ENCODE measurements at regions of chr12 and their contacts with region 1.

Region 1: DNA sequence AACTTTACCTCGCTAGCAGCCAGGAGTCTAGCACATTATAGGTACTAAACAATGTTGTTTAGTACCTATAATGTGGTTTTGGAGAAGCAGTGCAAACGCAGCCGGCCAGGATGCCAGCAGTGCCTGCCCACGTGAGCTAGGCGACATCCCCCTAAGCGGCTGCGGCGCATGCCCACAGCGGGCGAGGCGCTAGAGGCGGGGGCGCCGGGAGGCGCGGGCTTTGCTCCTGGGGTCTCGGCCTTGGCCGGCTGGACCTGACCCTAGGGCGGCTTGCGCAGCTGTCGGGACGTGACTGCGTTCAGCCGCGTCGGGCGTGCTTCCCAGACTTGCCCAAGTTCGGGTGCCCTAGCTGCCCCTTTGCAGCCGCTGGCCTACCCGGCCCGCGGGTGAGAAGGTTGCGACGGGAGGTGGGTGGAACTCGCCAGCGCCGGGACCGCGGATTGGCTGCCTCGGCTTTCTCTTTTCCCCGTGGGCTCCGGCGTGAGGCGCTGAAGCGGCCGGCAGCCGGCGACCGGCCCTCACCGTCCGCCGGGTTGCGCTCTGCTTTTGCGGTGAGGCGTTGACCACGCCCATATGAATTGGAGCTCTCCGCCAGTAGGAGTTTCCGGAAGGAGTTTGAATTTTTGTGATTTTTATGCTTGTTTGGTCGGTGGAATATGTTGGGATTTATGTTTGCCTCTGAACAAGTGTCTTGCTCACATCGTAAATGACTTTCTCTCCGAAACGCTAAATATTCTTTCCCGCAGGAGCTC is at the start of gene TMEM19:
- DNase-seq: peak; percentile 89
- H3K4me3 Mint-ChIP-seq: peak within 1 kb of the TSS; percentile 87
- H3K27ac Mint-ChIP-seq: peak within 1 kb of the TSS; percentile 76
- H3K4me1 Mint-ChIP-seq: peaks cover 16% of the 10 kb centered on the region
- H3K27me3 Mint-ChIP-seq: no peaks in the 10 kb centered on the region
- CTCF ChIP-seq: peak; percentile 11
- total RNA-seq, gene TMEM19: 7.2 and 7.3 TPM in 2 replicates

Region 2: DNA sequence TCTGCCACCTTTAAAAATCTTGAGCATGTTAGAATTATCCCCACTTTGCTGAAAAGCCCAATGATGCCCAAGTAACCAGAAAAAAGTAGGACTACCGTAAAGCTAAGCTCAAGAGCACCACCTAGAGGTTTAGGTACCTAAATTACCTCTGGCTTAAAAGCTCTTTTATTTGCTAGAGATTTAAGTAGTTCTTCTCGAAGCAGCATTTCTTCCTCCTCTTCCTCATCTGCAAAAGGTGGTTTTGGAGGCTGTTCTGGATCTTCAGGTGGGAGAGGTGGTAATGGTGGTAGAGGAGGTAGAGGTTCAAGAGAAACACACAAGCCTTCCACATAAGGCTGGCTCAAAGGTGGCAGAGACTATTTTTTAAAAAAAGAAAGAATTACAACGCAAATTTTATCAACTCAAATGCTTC is 49.4 kb before region 1 on chr12:
- CTCF ChIA-PET with region 1: interaction called, 11 read pairs
- POLR2A ChIA-PET with region 1: interaction called, 4 read pairs
- intact Hi-C with region 1: no loop called
- DNase-seq: peak; percentile 70
- H3K4me3 Mint-ChIP-seq: no peak overlapping the region
- H3K27ac Mint-ChIP-seq: no peak overlapping the region
- H3K4me1 Mint-ChIP-seq: peaks cover 6% of the 10 kb centered on the region
- H3K27me3 Mint-ChIP-seq: no peaks in the 10 kb centered on the region
- CTCF ChIP-seq: peak; percentile 66

Region 3: GRCh38 chr12:71671816-71672215 is 14.3 kb before region 1 on chr12:
- CTCF ChIA-PET with region 1: interaction called, 17 read pairs
- POLR2A ChIA-PET with region 1: interaction called, 248 read pairs
- intact Hi-C with region 1: no loop called
- DNase-seq: no peak
- H3K4me3 Mint-ChIP-seq: no peak overlapping the region
- H3K27ac Mint-ChIP-seq: no peak overlapping the region
- H3K4me1 Mint-ChIP-seq: peaks cover 5% of the 10 kb centered on the region
- H3K27me3 Mint-ChIP-seq: no peaks in the 10 kb centered on the region
- CTCF ChIP-seq: no peak

Region 4: GRCh38 chr12:71702590-71702989 is 16.5 kb after region 1 on chr12:
- CTCF ChIA-PET with region 1: interaction called, 24 read pairs
- POLR2A ChIA-PET with region 1: interaction called, 54 read pairs
- intact Hi-C with region 1: no loop called
- DNase-seq: no peak
- H3K4me3 Mint-ChIP-seq: no peak overlapping the region
- H3K27ac Mint-ChIP-seq: no peak overlapping the region
- H3K4me1 Mint-ChIP-seq: no peaks in the 10 kb centered on the region
- H3K27me3 Mint-ChIP-seq: no peaks in the 10 kb centered on the region
- CTCF ChIP-seq: no peak

Region 5: DNA sequence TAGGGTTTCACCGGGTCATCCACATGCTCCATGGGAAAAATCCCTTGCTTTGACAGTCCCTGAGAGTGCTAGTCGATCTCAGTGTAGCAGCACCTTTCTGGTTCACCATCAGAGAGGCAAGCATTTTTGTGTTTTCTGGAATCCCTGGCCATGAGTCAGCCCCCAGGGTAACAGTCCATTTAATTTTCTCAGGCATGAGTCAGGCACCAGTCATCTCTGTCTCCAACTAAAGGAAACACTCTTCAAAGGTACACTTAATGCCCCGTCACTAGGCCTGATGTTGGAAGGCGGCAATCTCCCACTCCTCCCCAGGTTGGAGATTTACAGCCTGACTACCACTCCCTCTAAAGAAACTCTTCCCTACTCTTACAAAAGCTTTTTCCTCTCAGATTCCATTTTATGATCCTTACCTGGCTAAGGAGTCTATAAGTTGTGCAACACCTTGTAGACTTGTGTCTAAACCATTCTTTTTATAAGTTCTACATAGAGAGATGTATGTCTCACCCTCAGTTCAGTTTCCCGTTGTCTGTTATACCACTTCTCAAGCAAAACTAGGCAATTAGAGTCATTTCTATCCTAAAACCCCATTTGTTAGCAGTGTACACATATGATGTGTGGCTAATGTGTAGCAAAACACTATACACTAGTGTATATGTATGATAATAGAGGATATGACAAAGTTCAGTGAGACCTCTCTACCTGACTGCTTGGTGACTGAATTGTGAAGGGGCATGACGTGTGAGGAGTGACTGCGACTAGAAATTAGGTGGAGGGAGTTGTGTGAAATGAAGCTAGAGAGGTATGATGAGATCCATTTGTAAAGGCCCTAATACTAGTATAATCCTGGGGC is 24.4 kb after region 1 on chr12:
- CTCF ChIA-PET with region 1: interaction called, 46 read pairs
- POLR2A ChIA-PET with region 1: interaction called, 54 read pairs
- intact Hi-C with region 1: no loop called
- DNase-seq: peak; percentile 95
- H3K4me3 Mint-ChIP-seq: peak overlapping the region; percentile 2
- H3K27ac Mint-ChIP-seq: peak overlapping the region; percentile 91
- H3K4me1 Mint-ChIP-seq: peaks cover 16% of the 10 kb centered on the region
- H3K27me3 Mint-ChIP-seq: no peaks in the 10 kb centered on the region
- CTCF ChIP-seq: no peak

Region 6: GRCh38 chr12:71719615-71720370 is 33.7 kb after region 1 on chr12:
- CTCF ChIA-PET with region 1: interaction called, 46 read pairs
- POLR2A ChIA-PET with region 1: interaction called, 66 read pairs
- intact Hi-C with region 1: loop called (anchors 1 kb)
- DNase-seq: peak; percentile 92
- H3K4me3 Mint-ChIP-seq: no peak overlapping the region
- H3K27ac Mint-ChIP-seq: peak overlapping the region; percentile 30
- H3K4me1 Mint-ChIP-seq: peaks cover 7% of the 10 kb centered on the region
- H3K27me3 Mint-ChIP-seq: no peaks in the 10 kb centered on the region
- CTCF ChIP-seq: no peak

Region 7: DNA sequence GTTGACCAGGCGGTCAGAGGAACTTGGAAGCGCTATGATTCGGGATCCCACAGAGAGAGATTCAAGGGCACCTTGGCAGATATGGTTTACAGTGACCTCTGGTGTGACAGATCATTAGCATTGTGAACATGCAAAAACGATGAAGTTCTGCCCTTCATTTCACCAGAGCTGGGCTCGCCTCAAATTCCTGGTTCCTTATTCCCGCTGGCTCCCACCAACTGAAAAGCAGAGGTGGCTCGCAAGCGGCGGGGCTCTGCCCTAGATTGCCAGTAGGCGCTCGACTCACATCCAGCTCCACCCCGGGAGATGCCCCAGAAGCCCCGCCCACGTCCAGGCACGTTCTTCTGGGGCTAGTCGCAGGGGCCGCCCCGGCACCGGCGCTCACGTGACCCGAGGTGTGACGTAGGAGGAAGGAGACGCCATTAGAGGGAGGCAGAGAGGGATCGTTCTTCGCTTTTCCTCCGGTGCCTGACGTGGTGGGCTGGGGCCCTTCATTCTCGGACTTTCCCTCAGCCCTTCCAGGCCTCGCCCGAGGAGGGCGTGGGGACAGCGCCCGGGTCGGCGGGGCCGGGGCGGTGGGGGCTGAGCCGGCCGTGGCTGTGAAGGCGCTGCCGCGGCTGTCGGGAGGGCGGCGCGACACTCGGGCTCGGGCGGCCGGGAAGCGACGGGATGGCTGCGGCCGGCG is 68.5 kb after region 1 on chr12 and contains the start of gene RAB21:
- CTCF ChIA-PET with region 1: interaction called, 226 read pairs
- POLR2A ChIA-PET with region 1: interaction called, 141 read pairs
- intact Hi-C with region 1: no loop called
- DNase-seq: peak; percentile 98
- H3K4me3 Mint-ChIP-seq: peak within 1 kb of the TSS; percentile 86
- H3K27ac Mint-ChIP-seq: peak within 1 kb of the TSS; percentile 89
- H3K4me1 Mint-ChIP-seq: no peaks in the 10 kb centered on the region
- H3K27me3 Mint-ChIP-seq: peaks cover 23% of the 10 kb centered on the region
- CTCF ChIP-seq: no peak
- total RNA-seq, gene RAB21: 86.4 and 88.0 TPM in 2 replicates

Region 8: DNA sequence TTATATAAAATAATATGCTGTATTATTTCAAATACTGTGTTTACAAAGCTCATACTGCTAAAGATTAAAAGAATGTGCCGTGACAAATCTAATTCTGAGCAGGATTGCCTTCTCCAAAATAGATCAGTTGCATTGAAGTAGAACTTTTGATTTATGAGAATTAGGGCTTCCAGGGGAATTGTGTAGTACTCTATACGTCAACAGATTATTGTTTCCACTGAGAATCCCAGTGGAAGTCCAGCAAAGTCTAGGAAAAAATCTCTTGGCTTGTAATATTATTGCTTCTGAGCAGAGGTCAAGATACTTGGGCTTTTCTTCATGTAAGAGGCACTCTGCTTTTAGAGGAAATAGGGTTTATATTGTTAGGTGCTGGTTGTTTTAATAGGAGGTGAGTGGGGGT is 720.0 kb after region 1 on chr12:
- CTCF ChIA-PET with region 1: no interaction called
- POLR2A ChIA-PET with region 1: no interaction called
- intact Hi-C with region 1: no loop called
- DNase-seq: no peak
- H3K4me3 Mint-ChIP-seq: no peak overlapping the region
- H3K27ac Mint-ChIP-seq: no peak overlapping the region
- H3K4me1 Mint-ChIP-seq: no peaks in the 10 kb centered on the region
- H3K27me3 Mint-ChIP-seq: no peaks in the 10 kb centered on the region
- CTCF ChIP-seq: no peak